GM23248 (cell line): ENCODE measurements at regions of chr7 and their contacts with region 1.

Region 1: DNA sequence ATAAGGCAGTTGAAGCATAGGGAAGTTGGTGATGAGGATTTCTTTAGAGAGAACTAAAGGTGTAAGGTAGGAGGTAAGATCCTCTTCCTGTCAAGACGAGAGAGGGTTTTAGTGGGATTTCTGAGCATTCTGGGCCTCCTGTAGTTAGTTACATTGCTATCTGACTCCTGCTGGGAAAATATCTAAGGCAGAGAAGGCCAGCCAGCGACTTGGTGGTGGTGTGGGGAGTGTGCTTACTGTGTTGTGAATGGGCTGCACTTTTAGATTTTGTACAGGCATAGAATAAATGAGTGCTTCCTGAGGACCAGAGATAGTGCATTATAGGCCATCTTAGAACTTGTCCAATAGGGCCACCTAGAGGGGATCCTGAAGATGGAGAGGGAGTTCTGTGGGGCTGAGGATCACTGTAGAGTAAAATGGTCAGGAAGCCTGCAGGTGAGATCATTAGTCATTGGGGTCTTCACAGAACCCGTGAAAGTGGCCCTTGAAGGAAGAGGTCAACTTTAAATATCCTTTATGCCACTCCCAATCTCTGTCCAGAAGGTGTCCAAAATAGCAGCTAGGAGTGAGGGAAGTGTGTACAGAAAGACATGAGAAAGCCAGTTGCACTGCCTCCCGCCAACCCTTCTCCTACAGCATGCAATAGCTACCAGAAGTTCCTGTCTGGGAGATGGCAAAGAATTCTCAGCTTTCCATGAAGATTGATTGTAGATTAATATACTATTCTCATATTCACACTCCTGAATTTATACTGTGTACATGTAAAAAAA is 266.6 kb downstream of the POLR1F start:
- DNase-seq: peak; percentile 76
- H3K4me3 ChIP-seq: no peak overlapping the region
- H3K27ac ChIP-seq: no peak overlapping the region
- H3K4me1 ChIP-seq: no peaks in the 10 kb centered on the region
- H3K27me3 ChIP-seq: no peaks in the 10 kb centered on the region

Region 2: DNA sequence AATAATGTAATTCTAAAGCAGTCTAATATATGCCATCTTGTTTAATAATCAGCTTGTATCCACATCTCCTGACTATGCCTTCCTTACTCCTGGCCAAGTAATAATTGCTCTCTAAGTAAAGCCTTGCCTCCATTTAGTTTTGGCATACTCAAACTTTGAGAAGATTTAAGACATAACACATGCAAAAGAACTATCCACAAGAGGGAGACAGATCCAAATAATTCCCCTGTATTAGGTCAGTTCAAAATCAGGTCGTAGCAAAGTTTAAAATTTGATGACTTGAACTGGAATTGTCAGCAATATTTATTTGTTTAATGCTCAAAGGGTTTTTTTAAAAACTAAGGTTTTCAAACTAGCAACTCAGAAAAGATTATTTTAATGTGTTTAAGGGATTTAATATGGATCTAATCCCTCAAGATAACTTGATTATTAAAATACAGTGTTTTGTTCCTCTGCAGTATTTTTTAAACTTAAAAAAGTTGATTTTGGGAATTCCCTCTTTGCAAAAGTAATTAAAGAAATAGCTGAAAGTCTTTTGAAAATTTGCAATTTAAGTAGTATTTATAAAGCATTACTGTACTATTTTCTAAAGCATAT is 851.4 kb before region 1 on chr7:
- in situ Hi-C with region 1: loop called (anchors 10 kb)
- DNase-seq: peak; percentile 74
- H3K4me3 ChIP-seq: peak overlapping the region; percentile 71
- H3K27ac ChIP-seq: peak overlapping the region; percentile 28; the same call in 1 of the 2 replicates
- H3K4me1 ChIP-seq: peaks cover 7% of the 10 kb centered on the region; the same call in 1 of the 2 replicates
- H3K27me3 ChIP-seq: no peaks in the 10 kb centered on the region

Region 3: DNA sequence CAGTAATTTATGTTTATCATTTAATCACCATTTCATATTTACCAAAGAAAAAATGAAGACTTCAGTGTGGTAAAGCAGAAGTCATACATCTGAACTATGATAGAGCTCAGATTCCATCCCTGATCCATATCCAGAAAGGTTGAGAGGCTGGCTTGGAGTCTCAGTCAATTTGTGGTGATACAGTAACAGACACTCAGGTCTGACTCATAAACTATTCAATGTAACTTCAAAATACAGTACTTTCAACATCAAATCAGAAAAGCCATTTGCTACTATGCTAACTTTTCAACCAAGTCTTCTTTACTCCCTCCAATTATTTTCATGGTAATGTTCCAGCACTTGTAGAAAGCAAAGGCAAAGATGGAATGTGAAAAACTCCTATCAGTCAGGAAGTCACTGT is 756.2 kb before region 1 on chr7:
- in situ Hi-C with region 1: loop called (anchors 10 kb)
- DNase-seq: peak; percentile 62
- H3K4me3 ChIP-seq: no peak overlapping the region
- H3K27ac ChIP-seq: no peak overlapping the region
- H3K4me1 ChIP-seq: peaks cover 10% of the 10 kb centered on the region
- H3K27me3 ChIP-seq: no peaks in the 10 kb centered on the region

Region 4: DNA sequence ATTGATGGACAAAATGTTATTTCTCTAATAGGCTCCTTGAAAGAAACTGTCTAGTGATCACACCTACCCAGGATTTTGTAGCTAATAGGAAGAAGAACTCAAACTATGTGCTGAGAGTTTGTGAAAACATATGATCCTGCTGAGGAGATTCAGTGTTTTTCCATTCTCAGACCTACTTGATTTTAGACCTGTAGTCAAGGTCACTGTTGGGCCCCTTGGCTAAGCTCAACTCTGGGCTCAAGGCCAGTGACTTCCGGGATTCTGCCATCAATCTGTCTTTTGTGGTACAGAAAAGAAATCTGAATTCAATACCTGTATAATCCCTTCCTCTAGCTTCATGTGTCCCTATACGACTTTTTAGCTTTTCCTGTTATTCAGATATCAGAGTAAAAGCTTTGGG is 217.2 kb before region 1 on chr7:
- in situ Hi-C with region 1: no loop called
- DNase-seq: no peak
- H3K4me3 ChIP-seq: no peak overlapping the region
- H3K27ac ChIP-seq: no peak overlapping the region
- H3K4me1 ChIP-seq: 0 out of 2 replicates have a peak, but pooled peaks cover 3% of the 10 kb centered on the region
- H3K27me3 ChIP-seq: no peaks in the 10 kb centered on the region

Region 5: GRCh38 chr7:19262826-19263225 is 179.4 kb before region 1 on chr7:
- in situ Hi-C with region 1: no loop called
- DNase-seq: no peak
- H3K4me3 ChIP-seq: no peak overlapping the region
- H3K27ac ChIP-seq: no peak overlapping the region
- H3K4me1 ChIP-seq: no peaks in the 10 kb centered on the region
- H3K27me3 ChIP-seq: no peaks in the 10 kb centered on the region

Region 6: DNA sequence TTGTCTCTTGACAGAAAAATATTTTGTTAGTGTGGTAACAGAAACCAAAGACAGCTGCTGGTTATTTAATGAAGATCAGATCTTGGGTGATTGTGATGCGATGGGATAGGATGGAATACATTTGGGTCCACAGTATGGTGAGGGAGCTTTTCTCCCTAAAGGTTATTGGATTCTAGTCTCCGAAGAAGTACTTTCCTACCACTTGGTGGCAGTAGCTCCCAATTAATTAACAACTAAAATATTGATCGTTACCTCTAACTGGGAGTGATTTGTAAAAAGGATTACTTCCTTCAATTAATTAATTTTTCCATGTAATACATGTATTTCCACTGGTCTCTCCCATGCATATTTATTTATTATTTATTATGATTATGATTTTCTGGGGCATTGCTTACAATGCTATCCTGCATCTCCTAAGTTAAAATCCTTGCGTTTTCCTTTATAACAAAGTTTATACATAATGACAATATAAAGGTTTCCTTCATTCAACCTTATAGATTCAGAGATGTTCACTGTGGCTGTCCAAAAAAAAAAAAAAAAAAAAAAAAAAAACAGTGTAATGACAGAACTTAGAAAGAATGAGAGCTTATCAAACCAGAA is 305.6 kb after region 1 on chr7:
- in situ Hi-C with region 1: no loop called
- DNase-seq: peak; percentile 59
- H3K4me3 ChIP-seq: no peak overlapping the region
- H3K27ac ChIP-seq: no peak overlapping the region
- H3K4me1 ChIP-seq: no peaks in the 10 kb centered on the region
- H3K27me3 ChIP-seq: no peaks in the 10 kb centered on the region; the same call in 1 of the 2 replicates

Region 7: GRCh38 chr7:19872094-19872493 is 429.9 kb after region 1 on chr7:
- in situ Hi-C with region 1: no loop called
- DNase-seq: no peak
- H3K4me3 ChIP-seq: no peak overlapping the region
- H3K27ac ChIP-seq: no peak overlapping the region
- H3K4me1 ChIP-seq: no peaks in the 10 kb centered on the region
- H3K27me3 ChIP-seq: no peaks in the 10 kb centered on the region